ENCODE measurements at regions of chr10 and their contacts with region 1.

Region 1: DNA sequence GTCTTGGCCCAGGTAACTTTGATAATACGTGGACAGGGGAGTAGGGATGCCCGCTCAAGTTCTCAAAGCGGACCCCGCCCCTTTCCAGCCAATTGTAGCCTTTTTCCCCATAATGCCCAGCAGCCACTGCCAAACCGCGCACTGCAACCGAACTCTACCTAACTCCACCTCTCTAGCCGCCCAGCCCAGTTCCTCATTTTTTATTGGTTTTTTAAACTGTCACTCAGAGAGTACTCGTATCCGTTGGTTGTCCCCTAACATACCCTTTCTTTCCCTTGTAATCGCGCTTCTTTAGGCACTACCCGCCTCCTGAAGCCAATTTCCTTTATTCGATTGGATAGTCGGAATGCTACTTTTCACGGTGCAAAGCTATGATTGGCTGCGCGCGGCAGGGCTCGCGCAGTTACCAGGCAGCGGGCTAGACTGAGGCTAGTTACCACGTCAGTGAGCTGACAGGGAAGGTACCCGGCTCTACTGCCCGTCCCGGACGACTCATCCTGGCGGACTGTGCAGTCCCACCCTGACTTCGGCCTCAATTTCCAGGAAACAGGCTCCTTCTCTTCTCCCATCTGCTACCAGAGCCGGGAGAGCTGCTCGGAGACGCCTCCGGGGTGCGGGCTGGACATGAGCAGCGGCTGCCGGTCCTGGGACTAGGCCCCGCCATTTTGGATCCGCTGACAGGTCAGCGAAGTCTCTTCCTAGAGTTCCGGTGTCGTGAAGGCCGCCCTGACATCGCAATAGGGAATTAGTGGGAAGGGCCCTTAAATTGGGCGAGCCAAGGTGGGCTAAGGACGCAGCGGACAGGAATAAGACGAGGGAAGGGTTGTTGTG is at the start of gene GBF1:
- DNase-seq: peak; percentile 76
- ATAC-seq: peak; percentile 88
- H3K4me3 Mint-ChIP-seq: peak within 1 kb of the TSS; percentile 98
- H3K27ac Mint-ChIP-seq: peak within 1 kb of the TSS; percentile 91
- H3K4me1 Mint-ChIP-seq: peaks cover 58% of the 10 kb centered on the region
- H3K27me3 Mint-ChIP-seq: peaks cover 22% of the 10 kb centered on the region
- CTCF ChIP-seq: no peak
- total RNA-seq, gene GBF1: 40.8 and 44.3 TPM in 2 replicates

Region 2: GRCh38 chr10:101353692-101354327 is 891.5 kb before region 1 on chr10 and contains the start of gene BTRC:
- CTCF ChIA-PET with region 1: no interaction called
- POLR2A ChIA-PET with region 1: no interaction called
- intact Hi-C with region 1: loop called (anchors 10 kb)
- DNase-seq: peak; percentile 89
- ATAC-seq: peak; percentile 96
- H3K4me3 Mint-ChIP-seq: peak within 1 kb of the TSS; percentile 99
- H3K27ac Mint-ChIP-seq: peak within 1 kb of the TSS; percentile 90
- H3K4me1 Mint-ChIP-seq: peaks cover 24% of the 10 kb centered on the region
- H3K27me3 Mint-ChIP-seq: peaks cover 18% of the 10 kb centered on the region
- CTCF ChIP-seq: no peak
- total RNA-seq, gene BTRC: 11.8 and 19.4 TPM in 2 replicates

Region 3: GRCh38 chr10:102225646-102226541 is 19.4 kb before region 1 on chr10 and contains the start of gene ELOVL3:
- CTCF ChIA-PET with region 1: interaction called, 50 read pairs
- POLR2A ChIA-PET with region 1: interaction called, 21 read pairs
- intact Hi-C with region 1: loop called (anchors 1 kb)
- DNase-seq: peak; percentile 69
- ATAC-seq: peak; percentile 94
- H3K4me3 Mint-ChIP-seq: peak within 1 kb of the TSS; percentile 71
- H3K27ac Mint-ChIP-seq: no peak within 1 kb of the TSS
- H3K4me1 Mint-ChIP-seq: peaks cover 19% of the 10 kb centered on the region
- H3K27me3 Mint-ChIP-seq: peaks cover 59% of the 10 kb centered on the region
- CTCF ChIP-seq: no peak
- total RNA-seq, gene ELOVL3: not detected in 2 replicates

Region 4: DNA sequence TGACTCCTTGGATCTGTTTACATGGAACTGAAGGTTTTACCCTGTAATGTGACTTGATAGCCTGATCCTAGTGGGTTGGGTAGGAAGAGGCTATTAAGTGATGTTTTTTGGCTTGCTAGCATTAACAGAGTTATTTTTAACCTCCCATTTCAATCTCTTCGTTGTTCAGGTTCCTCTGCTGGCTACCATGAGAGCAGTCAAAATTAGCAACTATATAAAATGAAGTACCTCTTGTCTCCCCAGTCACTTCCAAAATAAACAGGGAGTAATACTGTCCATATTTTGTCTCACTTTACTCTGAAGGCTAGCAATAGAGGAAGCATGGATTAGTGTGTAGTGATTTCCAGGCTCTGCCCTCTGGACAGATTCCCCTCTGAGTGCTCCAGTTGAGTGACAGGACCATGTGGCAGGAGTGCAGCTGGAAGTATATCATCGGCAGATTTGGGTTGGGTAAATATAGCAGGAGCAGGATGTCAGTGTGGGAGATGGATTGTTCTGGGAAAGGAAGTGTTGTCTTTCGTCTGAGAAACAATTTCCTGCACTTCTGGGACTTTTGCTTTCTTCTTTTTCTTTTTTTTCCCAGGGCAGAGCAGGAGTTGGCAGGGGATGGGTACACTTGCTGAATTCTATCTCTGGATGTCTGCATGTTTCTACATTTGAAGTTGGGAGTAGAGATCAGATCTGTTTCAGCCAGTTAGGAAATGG is 35.2 kb after region 1 on chr10:
- CTCF ChIA-PET with region 1: no interaction called
- POLR2A ChIA-PET with region 1: interaction called, 10 read pairs
- intact Hi-C with region 1: no loop called
- DNase-seq: no peak
- ATAC-seq: no peak
- H3K4me3 Mint-ChIP-seq: peak overlapping the region; percentile 55
- H3K27ac Mint-ChIP-seq: peak overlapping the region; percentile 57
- H3K4me1 Mint-ChIP-seq: peaks cover 32% of the 10 kb centered on the region
- H3K27me3 Mint-ChIP-seq: no peaks in the 10 kb centered on the region
- CTCF ChIP-seq: no peak

Region 5: GRCh38 chr10:102461187-102462054 is 216.1 kb after region 1 on chr10:
- CTCF ChIA-PET with region 1: no interaction called
- POLR2A ChIA-PET with region 1: interaction called, 5 read pairs
- intact Hi-C with region 1: loop called (anchors 1 kb)
- DNase-seq: peak; percentile 90
- ATAC-seq: peak; percentile 99
- H3K4me3 Mint-ChIP-seq: peak overlapping the region; percentile 88
- H3K27ac Mint-ChIP-seq: peak overlapping the region; percentile 85
- H3K4me1 Mint-ChIP-seq: peaks cover 31% of the 10 kb centered on the region
- H3K27me3 Mint-ChIP-seq: no peaks in the 10 kb centered on the region
- CTCF ChIP-seq: no peak